ENCODE measurements at regions of chr5 and their contacts with region 1.

Region 1: GRCh38 chr5:148998174-148998797 is 64.6 kb downstream of the SH3TC2 start:
- DNase-seq: peak; percentile 93
- H3K4me3 Mint-ChIP-seq: no peak overlapping the region
- H3K27ac Mint-ChIP-seq: peak overlapping the region; percentile 73
- H3K4me1 Mint-ChIP-seq: peaks cover 60% of the 10 kb centered on the region
- H3K27me3 Mint-ChIP-seq: no peaks in the 10 kb centered on the region
- CTCF ChIP-seq: peak; percentile 79

Region 2: DNA sequence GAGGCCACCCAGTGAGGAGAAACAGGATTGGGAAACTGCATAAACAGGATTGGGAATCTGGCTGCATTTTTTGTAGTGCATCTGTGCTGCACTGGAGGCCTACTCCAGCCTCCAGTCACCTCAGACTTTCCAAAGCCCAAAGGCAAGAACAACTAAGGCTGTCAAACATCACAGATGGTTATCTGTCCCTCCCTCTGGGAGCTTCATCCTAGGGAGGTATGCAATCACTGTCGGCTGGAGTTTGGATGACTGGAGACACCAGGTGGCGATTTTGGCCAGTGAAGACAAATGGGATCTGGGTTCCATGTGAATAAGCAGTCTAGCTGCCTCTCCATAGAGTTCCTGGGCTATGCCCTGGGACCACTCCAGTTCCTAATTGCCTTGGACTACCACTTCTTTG is 739.0 kb before region 1 on chr5:
- CTCF ChIA-PET with region 1: no interaction called
- POLR2A ChIA-PET with region 1: no interaction called
- intact Hi-C with region 1: no loop called
- DNase-seq: no peak
- H3K4me3 Mint-ChIP-seq: no peak overlapping the region
- H3K27ac Mint-ChIP-seq: no peak overlapping the region
- H3K4me1 Mint-ChIP-seq: no peaks in the 10 kb centered on the region
- H3K27me3 Mint-ChIP-seq: no peaks in the 10 kb centered on the region
- CTCF ChIP-seq: no peak

Region 3: DNA sequence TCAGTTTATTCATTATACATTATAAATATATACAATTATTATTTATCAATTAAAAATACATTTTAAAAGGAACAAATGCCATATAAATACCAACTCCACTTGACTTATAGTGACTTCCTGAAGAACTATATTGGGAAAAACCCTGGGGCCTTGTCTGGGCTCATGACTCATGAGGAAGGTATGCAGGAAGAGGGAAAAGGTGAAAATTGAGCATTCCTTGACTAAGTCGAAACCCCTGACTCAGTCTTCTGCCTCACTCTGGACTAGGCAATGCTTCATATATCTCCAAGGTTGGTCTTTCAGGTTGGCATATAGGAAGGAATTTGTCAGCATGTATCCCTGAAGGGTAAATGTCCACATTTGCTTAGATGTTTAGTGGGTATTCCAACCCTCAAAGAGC is 14.0 kb before region 1 on chr5:
- CTCF ChIA-PET with region 1: interaction called, 1,118 read pairs
- POLR2A ChIA-PET with region 1: interaction called, 1,127 read pairs
- intact Hi-C with region 1: no loop called
- DNase-seq: peak; percentile 89
- H3K4me3 Mint-ChIP-seq: no peak overlapping the region
- H3K27ac Mint-ChIP-seq: peak overlapping the region; percentile 95
- H3K4me1 Mint-ChIP-seq: peaks cover 68% of the 10 kb centered on the region
- H3K27me3 Mint-ChIP-seq: no peaks in the 10 kb centered on the region
- CTCF ChIP-seq: no peak

Region 4: GRCh38 chr5:149011074-149011476 is 12.8 kb after region 1 on chr5:
- CTCF ChIA-PET with region 1: interaction called, 1,118 read pairs
- POLR2A ChIA-PET with region 1: interaction called, 6 read pairs
- intact Hi-C with region 1: no loop called
- DNase-seq: peak; percentile 89
- H3K4me3 Mint-ChIP-seq: no peak overlapping the region
- H3K27ac Mint-ChIP-seq: peak overlapping the region; percentile 81
- H3K4me1 Mint-ChIP-seq: peaks cover 24% of the 10 kb centered on the region
- H3K27me3 Mint-ChIP-seq: no peaks in the 10 kb centered on the region
- CTCF ChIP-seq: peak; percentile 14

Region 5: DNA sequence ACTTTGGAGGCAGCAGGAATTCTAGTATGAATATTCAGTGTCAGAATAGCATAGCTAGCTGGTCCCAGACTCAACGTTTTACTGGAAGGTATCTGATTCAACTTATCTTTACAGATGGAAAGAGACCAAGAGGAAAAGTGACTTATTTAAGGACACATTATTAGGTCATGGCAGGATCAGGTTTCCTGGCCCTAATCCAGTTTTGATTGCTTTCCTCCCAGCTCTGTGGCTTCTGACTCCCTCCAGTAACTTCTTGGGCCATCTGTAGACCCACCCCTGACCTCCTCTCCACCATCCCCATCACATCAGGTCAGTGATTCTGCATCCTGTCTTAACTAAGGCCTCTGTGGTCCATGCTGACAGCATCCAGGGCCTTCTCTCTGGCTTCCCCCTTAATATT is 26.2 kb after region 1 on chr5:
- CTCF ChIA-PET with region 1: interaction called, 10 read pairs
- POLR2A ChIA-PET with region 1: interaction called, 5 read pairs
- intact Hi-C with region 1: no loop called
- DNase-seq: peak; percentile 39
- H3K4me3 Mint-ChIP-seq: no peak overlapping the region
- H3K27ac Mint-ChIP-seq: no peak overlapping the region
- H3K4me1 Mint-ChIP-seq: peaks cover 16% of the 10 kb centered on the region
- H3K27me3 Mint-ChIP-seq: no peaks in the 10 kb centered on the region
- CTCF ChIP-seq: no peak

Region 6: DNA sequence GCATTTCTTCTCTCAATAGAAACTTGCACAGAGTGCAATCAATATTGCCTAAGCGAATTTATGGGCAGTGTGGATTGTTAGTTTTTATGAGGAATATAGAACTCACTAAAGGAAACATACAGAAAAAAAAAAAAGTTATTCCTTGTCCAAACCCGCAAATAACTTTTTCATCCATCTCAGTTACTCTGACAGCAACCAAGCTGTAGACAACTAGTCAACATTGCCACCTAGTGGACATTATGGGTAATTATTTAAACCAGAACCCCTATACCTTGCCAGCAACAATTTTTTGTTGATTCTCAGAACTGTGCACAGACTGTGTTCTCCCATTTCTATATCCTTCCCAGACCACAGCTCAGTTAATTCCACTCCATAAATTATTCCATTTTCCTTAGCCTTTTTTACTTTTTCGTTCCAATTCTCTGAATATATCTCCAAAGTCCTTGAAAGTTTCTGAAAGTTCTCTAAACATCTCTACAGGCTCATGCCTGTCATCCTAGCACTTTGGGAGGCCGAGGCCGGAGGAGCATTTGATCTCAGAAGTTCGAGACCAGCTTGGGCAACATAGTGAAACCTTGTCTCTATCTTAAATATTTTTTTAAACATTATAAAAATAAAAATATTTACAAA is 270.8 kb after region 1 on chr5:
- CTCF ChIA-PET with region 1: interaction called, 5 read pairs
- POLR2A ChIA-PET with region 1: interaction called, 3 read pairs
- intact Hi-C with region 1: loop called (anchors 10 kb)
- DNase-seq: peak; percentile 84
- H3K4me3 Mint-ChIP-seq: no peak overlapping the region
- H3K27ac Mint-ChIP-seq: no peak overlapping the region
- H3K4me1 Mint-ChIP-seq: peaks cover 14% of the 10 kb centered on the region
- H3K27me3 Mint-ChIP-seq: no peaks in the 10 kb centered on the region
- CTCF ChIP-seq: peak; percentile 91

Measured in MCF 10A (cell line).